HCT116 (cell line): ENCODE measurements at regions of chr4 and their contacts with region 1.

Region 1: DNA sequence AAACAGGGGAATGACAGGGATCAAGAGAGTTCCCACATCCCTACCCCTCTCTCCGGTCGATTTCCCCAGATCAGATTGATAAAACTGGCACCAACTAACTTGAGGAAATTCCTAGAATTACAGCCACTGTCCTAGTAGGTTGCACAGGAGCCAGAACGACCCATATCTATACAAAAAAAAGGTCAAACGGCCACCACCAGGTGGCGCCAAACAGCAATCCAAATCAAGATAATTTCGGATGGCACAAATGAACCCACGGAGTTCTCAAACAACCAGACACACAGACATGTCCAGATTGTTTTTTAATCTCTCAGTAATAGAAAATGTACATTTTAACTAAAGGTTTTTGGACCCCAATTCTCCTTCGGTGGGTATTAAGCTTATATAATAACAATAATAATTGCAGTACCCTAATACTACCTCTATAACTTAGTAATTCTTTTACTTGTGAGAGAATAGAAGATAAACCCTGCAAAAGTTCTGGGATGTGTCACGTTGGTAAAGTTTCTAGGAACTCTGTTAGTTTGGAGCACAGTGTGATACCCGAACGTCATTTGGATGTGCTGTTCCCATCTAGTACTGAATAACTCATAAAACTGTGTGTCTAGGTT is 212.6 kb downstream of the SPOCK3 start:
- DNase-seq: peak; percentile 66
- ATAC-seq: peak; percentile 94
- H3K4me3 ChIP-seq: no peak overlapping the region
- H3K27ac ChIP-seq: no peak overlapping the region
- H3K4me1 ChIP-seq: no peaks in the 10 kb centered on the region; a peak in 1 of 4 replicates
- H3K27me3 ChIP-seq: no peaks in the 10 kb centered on the region
- CTCF ChIP-seq: peak; percentile 60 to 87 (median 65); a peak in 5 of 6 replicates
- POLR2A ChIP-seq: no peak
- RAD21 ChIP-seq: peak; percentile 84

Region 2: DNA sequence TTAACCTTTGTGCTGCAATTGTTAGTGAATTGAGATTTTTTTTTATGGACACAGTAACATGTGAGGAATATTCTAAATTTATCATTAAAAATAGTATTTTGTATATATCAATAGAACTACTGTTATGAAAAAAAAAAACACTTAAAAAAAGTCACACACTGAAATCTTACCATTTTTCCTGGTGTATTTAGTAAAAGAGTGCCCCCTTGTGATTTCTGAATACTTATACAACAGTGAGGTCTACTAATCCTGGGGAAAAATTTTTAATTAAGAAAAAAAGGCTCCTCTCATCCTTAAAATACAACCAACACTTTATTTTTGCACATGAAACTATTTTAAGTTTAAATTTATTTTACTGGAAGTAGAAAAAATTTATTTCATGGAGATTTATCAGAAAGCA is 269.0 kb after region 1 on chr4:
- CTCF ChIA-PET with region 1: interaction called, 3 read pairs
- POLR2A ChIA-PET with region 1: no interaction called
- RAD21 ChIA-PET with region 1: no interaction called
- intact Hi-C with region 1: loop called (anchors 1 kb)
- DNase-seq: peak; percentile 7
- ATAC-seq: no peak
- H3K4me3 ChIP-seq: no peak overlapping the region
- H3K27ac ChIP-seq: no peak overlapping the region
- H3K4me1 ChIP-seq: no peaks in the 10 kb centered on the region
- H3K27me3 ChIP-seq: no peaks in the 10 kb centered on the region
- CTCF ChIP-seq: peak in 2 of 3 experiments; percentile 33 to 36; a peak in 2 of 6 replicates
- POLR2A ChIP-seq: no peak
- RAD21 ChIP-seq: peak; percentile 53

Region 3: GRCh38 chr4:167622481-167623246 is 601.0 kb after region 1 on chr4:
- CTCF ChIA-PET with region 1: interaction called, 3 read pairs
- POLR2A ChIA-PET with region 1: no interaction called
- RAD21 ChIA-PET with region 1: no interaction called
- intact Hi-C with region 1: loop called (anchors 1 kb)
- DNase-seq: peak; percentile 46
- ATAC-seq: peak; percentile 99
- H3K4me3 ChIP-seq: no peak overlapping the region
- H3K27ac ChIP-seq: no peak overlapping the region
- H3K4me1 ChIP-seq: no peaks in the 10 kb centered on the region
- H3K27me3 ChIP-seq: no peaks in the 10 kb centered on the region
- CTCF ChIP-seq: peak; percentile 46 to 89 (median 84); a peak in 5 of 6 replicates
- POLR2A ChIP-seq: no peak
- RAD21 ChIP-seq: peak; percentile 73